ENCODE measurements at regions of chr6 and their contacts with region 1.

Region 1: GRCh38 chr6:36685936-36686667 is 7.6 kb downstream of the CDKN1A start:
- DNase-seq: no peak
- H3K4me3 ChIP-seq: no peak overlapping the region
- H3K27ac ChIP-seq: peak overlapping the region in 1 of 2 experiments; percentile 44; a peak in 1 of 4 replicates
- H3K4me1 ChIP-seq: peaks cover 0 to 9% of the 10 kb centered on the region in 2 experiments; a peak in 1 of 4 replicates
- H3K27me3 ChIP-seq: no peaks in the 10 kb centered on the region
- CTCF ChIP-seq: no peak
- EP300 ChIP-seq: no peak
- RAD21 ChIP-seq: no peak

Region 2: DNA sequence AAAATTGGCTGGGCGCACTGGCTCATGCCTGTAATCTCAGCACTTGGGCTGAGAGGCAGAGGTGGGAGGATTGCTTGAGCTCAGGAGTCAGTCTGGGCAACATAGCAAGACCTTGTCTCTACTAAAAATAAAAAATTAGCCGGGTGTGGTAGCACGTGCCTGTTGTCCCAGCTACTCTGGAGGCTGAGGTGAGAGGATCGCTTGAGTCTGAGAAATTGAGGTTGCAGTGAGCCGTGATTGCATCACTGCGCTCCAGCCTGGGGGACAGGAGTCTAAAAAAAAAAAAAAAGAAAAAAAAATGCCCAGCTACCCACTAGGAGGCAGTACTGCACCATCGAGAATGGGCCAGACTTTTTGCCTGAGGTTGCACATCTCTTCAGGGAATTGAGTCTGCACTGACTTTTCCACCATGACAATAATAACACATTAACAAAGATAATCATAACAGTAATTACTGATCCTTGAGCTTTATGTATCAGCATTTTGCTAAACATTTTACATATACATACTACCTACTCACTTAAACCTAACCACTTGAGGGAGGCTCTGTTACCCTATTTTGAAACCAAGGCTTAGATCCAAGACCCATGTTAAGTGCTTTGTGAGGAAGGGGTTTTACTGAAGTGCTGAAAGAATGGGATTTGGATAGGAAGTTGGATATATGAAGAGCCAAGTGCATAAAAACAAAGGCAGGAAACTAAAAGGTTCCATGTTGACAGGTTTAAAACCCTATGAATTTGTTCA is 70.9 kb before region 1 on chr6:
- CTCF ChIA-PET with region 1: interaction called, 12 read pairs
- POLR2A ChIA-PET with region 1: interaction called, 3 read pairs
- DNase-seq: peak; percentile 49
- H3K4me3 ChIP-seq: no peak overlapping the region; a peak in 1 of 4 replicates
- H3K27ac ChIP-seq: peak overlapping the region; percentile 28 to 36; a peak in 2 of 4 replicates
- H3K4me1 ChIP-seq: peaks cover 15 to 23% of the 10 kb centered on the region in 2 experiments; a peak in 3 of 4 replicates
- H3K27me3 ChIP-seq: no peaks in the 10 kb centered on the region
- CTCF ChIP-seq: peak; percentile 86
- EP300 ChIP-seq: 0 out of 4 replicates have a peak, but pooled peaks of 1 of the 2 experiments have one; percentile 4
- RAD21 ChIP-seq: peak; percentile 85

Region 3: DNA sequence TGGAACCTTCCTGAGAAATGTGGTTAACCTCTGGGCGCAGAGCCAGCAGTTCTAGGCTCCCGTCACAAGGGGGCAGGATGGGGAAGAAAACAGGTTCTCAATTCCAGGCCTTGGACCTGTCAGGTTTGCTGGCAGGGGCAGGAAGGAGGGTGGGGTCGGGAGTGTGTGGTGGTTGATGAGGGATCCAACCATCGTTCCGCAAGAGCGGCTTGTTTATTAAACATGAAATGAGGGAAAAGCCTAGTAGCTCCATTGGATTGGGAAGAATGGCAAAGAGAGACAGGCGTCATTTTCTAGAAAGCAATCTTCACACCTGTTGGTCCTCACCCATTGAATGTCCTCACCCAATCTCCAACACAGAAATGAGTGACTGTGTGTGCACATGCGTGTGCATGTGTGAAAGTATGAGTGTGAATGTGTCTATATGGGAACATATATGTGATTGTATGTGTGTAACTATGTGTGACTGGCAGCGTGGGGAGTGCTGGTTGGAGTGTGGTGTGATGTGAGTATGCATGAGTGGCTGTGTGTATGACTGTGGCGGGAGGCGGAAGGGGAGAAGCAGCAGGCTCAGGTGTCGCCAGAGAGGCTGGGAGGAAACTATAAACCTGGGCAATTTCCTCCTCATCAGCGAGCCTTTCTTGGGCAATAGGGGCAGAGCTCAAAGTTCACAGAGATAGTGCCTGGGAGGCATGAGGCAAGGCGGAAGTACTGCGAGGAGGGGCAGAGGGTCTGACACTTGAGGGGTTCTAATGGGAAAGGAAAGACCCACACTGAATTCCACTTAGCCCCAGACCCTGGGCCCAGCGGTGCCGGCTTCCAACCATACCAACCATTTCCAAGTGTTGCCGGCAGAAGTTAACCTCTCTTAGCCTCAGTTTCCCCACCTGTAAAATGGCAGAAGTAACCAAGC is 62.3 kb before region 1 on chr6:
- CTCF ChIA-PET with region 1: interaction called, 91 read pairs
- POLR2A ChIA-PET with region 1: interaction called, 3 read pairs
- DNase-seq: peak; percentile 83
- H3K4me3 ChIP-seq: no peak overlapping the region; a peak in 1 of 4 replicates
- H3K27ac ChIP-seq: no peak overlapping the region
- H3K4me1 ChIP-seq: peaks cover 0 to 11% of the 10 kb centered on the region in 2 experiments; a peak in 2 of 4 replicates
- H3K27me3 ChIP-seq: no peaks in the 10 kb centered on the region
- CTCF ChIP-seq: peak; percentile 88
- EP300 ChIP-seq: peak in 1 of 2 experiments; percentile 55; a peak in 1 of 4 replicates
- RAD21 ChIP-seq: peak; percentile 94